CD4-positive, alpha-beta memory T cell (primary cell): ENCODE measurements at regions of chr7 and their contacts with region 1.

Region 1: DNA sequence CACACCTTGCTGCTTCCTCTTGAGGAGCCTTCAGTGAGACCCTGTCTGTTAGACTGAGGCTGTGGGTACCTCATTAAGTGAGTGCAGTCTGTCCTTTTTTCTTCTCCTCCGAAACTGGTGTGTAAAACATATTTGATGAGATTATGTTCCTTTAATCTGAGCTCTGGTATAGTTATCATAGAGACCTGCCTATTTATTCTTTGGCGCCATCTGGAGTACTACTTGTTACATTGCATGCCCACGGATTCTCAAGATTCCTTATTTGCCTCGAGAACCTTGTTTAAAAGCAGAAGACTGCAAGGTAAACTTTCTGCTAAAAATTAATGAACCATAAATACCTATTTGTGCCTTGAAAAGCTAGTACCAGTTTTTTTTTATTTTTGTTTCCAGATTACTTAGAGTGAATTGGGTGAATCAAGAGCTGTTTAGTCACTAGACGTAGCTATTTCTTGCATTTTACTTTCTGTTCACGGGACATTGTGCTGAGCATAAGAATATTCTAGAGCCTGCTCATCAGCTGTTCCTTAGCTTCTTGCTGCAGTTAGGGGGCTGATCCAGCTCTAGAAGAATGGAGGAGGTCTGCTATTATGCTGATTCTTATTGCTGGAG is 16.9 kb upstream of the STMP1 start:
- DNase-seq: peak; percentile 35 to 46 (median 43)
- H3K4me3 ChIP-seq: no peak overlapping the region
- H3K4me3 Mint-ChIP-seq: no peak overlapping the region
- H3K27ac ChIP-seq: no peak overlapping the region
- H3K27ac Mint-ChIP-seq: peak overlapping the region in 4 of 7 donors; percentile 18 to 68 (median 32)
- H3K4me1 ChIP-seq: no peaks in the 10 kb centered on the region
- H3K4me1 Mint-ChIP-seq: peaks cover 0 to 3% (median 2%) of the 10 kb centered on the region in 4 donors
- H3K27me3 ChIP-seq: no peaks in the 10 kb centered on the region
- H3K27me3 Mint-ChIP-seq: no peaks in the 10 kb centered on the region

Region 2: DNA sequence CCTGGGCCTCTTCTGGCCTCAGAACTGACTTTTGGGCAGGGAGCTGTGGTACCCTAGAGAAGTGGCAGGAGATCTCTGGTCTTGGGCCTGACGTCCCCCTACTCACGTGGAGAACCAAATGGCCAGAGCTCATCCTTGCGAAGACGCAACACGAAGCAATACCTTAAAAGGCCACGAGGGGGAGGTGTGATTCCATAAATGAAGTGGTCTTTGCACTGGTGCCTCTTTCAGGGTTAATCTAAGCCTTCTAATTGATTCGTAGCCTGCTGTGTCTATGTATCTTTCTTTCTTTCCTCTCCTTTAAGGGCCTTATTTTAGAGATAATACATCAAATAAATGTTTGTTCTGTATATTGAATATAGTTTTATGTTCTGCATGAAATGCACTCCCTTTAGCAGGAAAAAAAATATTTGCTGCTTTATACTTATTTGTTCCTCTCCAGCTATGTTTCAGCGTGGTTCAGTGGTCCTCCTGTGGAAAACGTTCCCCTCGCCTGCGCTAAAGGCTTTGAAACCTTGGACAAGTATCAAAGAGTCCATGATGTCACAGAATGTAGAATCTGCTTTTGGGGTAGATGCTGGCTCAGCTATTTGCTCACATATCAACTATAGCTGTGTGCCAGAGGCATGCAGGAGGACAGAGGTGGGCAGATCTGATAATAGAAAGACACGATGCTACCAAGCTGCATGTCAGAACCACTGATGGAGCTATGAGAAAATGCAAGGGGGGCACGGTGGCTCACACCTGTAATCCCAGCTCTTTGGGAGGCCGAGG is 370.7 kb before region 1 on chr7:
- CTCF ChIA-PET with region 1: interaction called, 113 read pairs
- POLR2A ChIA-PET with region 1: no interaction called
- intact Hi-C with region 1: no loop called
- DNase-seq: peak; percentile 55 to 65 (median 58)
- H3K4me3 ChIP-seq: no peak overlapping the region
- H3K4me3 Mint-ChIP-seq: no peak overlapping the region
- H3K27ac ChIP-seq: no peak overlapping the region
- H3K27ac Mint-ChIP-seq: no peak overlapping the region
- H3K4me1 ChIP-seq: no peaks in the 10 kb centered on the region
- H3K4me1 Mint-ChIP-seq: peaks cover 0 to 4% (median 3%) of the 10 kb centered on the region in 4 donors
- H3K27me3 ChIP-seq: no peaks in the 10 kb centered on the region
- H3K27me3 Mint-ChIP-seq: peaks cover 4 to 6% of the 10 kb centered on the region in 2 donors

Region 3: GRCh38 chr7:135281363-135281949 is 363.9 kb before region 1 on chr7:
- CTCF ChIA-PET with region 1: interaction called, 113 read pairs
- POLR2A ChIA-PET with region 1: no interaction called
- intact Hi-C with region 1: loop called (anchors 1 kb)
- DNase-seq: peak; percentile 77 to 79 (median 78)
- H3K4me3 ChIP-seq: no peak overlapping the region
- H3K4me3 Mint-ChIP-seq: peak overlapping the region in 6 of 8 donors; percentile 16 to 72 (median 36)
- H3K27ac ChIP-seq: no peak overlapping the region
- H3K27ac Mint-ChIP-seq: peak overlapping the region in 4 of 7 donors; percentile 59 to 85 (median 72)
- H3K4me1 ChIP-seq: peaks cover 21% of the 10 kb centered on the region
- H3K4me1 Mint-ChIP-seq: peaks cover 15 to 24% (median 21%) of the 10 kb centered on the region in 4 donors
- H3K27me3 ChIP-seq: no peaks in the 10 kb centered on the region
- H3K27me3 Mint-ChIP-seq: peaks cover 5 to 8% of the 10 kb centered on the region in 2 donors

Region 4: DNA sequence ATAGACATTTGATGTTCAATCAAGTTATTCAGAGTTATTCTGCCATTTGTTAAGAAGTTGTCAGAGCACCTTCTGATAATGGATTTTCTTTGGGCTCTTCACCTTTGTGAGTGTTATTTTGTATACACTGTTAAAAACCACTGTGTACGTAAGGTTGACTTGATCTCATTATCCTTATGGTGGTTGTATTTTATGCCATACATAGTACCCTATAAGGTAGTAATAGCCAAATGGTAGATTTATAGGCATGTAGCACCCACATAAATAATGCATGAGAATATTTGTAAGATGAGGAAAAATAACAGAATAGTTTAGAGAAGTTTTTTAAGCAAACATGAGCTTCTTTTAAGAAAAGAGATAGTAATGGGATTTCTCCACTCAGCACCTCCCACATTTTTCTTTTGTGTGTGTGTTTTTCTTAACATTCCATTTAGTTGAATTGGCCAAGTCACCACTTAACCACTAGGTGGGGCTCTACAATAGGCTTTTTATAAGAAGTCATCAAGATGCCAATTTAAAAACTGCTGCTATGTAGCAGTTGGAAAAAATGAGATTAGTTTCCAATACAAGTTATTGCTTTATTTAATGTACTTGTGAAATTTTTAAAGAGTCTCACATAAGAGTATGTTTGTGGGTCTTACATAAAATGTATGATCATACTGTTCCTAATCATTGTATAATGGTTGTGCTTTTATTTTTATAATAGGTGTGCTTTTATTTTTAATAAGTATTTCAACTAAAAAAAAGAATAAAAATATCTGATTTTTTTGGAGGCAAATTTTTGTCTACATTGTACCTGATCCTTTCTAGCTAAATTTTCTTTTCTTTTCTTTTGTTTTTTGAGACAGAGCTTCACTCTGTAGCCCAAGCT is 24.2 kb before region 1 on chr7:
- CTCF ChIA-PET with region 1: interaction called, 22 read pairs
- POLR2A ChIA-PET with region 1: no interaction called
- intact Hi-C with region 1: no loop called
- DNase-seq: peak in 4 of 5 donors; percentile 29 to 41 (median 34)
- H3K4me3 ChIP-seq: no peak overlapping the region
- H3K4me3 Mint-ChIP-seq: no peak overlapping the region
- H3K27ac ChIP-seq: no peak overlapping the region
- H3K27ac Mint-ChIP-seq: no peak overlapping the region
- H3K4me1 ChIP-seq: no peaks in the 10 kb centered on the region
- H3K4me1 Mint-ChIP-seq: no peaks in the 10 kb centered on the region
- H3K27me3 ChIP-seq: no peaks in the 10 kb centered on the region
- H3K27me3 Mint-ChIP-seq: no peaks in the 10 kb centered on the region

Region 5: DNA sequence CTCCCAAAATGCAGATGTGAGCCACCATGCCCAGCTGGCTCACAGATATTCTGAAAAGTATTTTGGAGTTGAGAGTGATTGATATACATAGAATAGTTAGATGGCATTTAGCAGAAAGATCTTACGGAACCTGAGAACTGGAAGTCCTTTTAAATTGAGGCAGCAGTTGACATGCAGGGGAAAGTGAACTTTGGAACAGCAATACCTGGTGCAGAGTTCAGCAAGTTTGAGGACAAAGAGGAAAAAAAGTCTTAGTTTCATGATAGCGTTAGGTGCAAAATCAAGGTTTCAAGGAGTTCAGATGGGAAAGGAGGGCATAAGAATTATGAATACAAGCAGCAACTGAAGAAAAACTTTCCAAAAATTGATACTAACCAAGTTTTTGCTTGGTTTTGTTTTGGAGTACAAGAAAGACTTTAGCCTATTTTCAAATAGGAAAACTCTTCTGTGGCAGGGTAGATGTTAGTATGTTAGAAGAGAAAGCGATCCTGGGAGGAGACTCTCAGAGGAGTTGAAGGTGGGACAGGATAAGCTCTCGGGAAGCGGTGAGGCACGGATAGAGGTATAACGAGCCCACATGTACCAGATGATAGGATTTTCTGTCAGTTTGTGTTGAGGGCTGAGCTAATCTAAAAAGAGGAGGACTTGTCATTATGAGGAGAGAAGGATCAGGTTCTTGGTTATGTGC is 11.1 kb before region 1 on chr7:
- CTCF ChIA-PET with region 1: interaction called, 36 read pairs
- POLR2A ChIA-PET with region 1: no interaction called
- intact Hi-C with region 1: no loop called
- DNase-seq: no peak
- H3K4me3 ChIP-seq: no peak overlapping the region
- H3K4me3 Mint-ChIP-seq: no peak overlapping the region
- H3K27ac ChIP-seq: no peak overlapping the region
- H3K27ac Mint-ChIP-seq: peak overlapping the region in 2 of 7 donors; percentile 27 to 47
- H3K4me1 ChIP-seq: no peaks in the 10 kb centered on the region
- H3K4me1 Mint-ChIP-seq: peaks cover 0 to 4% (median 0%) of the 10 kb centered on the region in 4 donors
- H3K27me3 ChIP-seq: no peaks in the 10 kb centered on the region
- H3K27me3 Mint-ChIP-seq: no peaks in the 10 kb centered on the region

Region 6: GRCh38 chr7:135662373-135663114 is 17.1 kb after region 1 on chr7 and contains the start of gene STMP1:
- CTCF ChIA-PET with region 1: interaction called, 57 read pairs
- POLR2A ChIA-PET with region 1: no interaction called
- intact Hi-C with region 1: no loop called
- DNase-seq: peak; percentile 92 to 94 (median 93)
- H3K4me3 ChIP-seq: peak within 1 kb of the TSS; percentile 86 to 98
- H3K4me3 Mint-ChIP-seq: peak within 1 kb of the TSS; percentile 91 to 98 (median 96)
- H3K27ac ChIP-seq: peak within 1 kb of the TSS; percentile 76
- H3K27ac Mint-ChIP-seq: peak within 1 kb of the TSS; percentile 83 to 98 (median 95)
- H3K4me1 ChIP-seq: peaks cover 30% of the 10 kb centered on the region
- H3K4me1 Mint-ChIP-seq: peaks cover 25 to 52% (median 38%) of the 10 kb centered on the region in 4 donors
- H3K27me3 ChIP-seq: no peaks in the 10 kb centered on the region
- H3K27me3 Mint-ChIP-seq: no peaks in the 10 kb centered on the region
- total RNA-seq, gene STMP1: 29.5 to 29.7 TPM

Region 7: GRCh38 chr7:135672560-135673359 is 27.4 kb after region 1 on chr7:
- CTCF ChIA-PET with region 1: interaction called, 13 read pairs
- POLR2A ChIA-PET with region 1: no interaction called
- intact Hi-C with region 1: no loop called
- DNase-seq: peak in 2 of 5 donors; percentile 7 to 11
- H3K4me3 ChIP-seq: no peak overlapping the region
- H3K4me3 Mint-ChIP-seq: no peak overlapping the region
- H3K27ac ChIP-seq: no peak overlapping the region
- H3K27ac Mint-ChIP-seq: no peak overlapping the region
- H3K4me1 ChIP-seq: no peaks in the 10 kb centered on the region
- H3K4me1 Mint-ChIP-seq: peaks cover 11 to 42% (median 24%) of the 10 kb centered on the region in 4 donors
- H3K27me3 ChIP-seq: no peaks in the 10 kb centered on the region
- H3K27me3 Mint-ChIP-seq: no peaks in the 10 kb centered on the region